ENCODE measurements at regions of chr11 and their contacts with region 1.

Region 1: GRCh38 chr11:17978553-17979287 is 34.1 kb downstream of the SERGEF start:
- DNase-seq: peak; percentile 71
- H3K4me3 Mint-ChIP-seq: no peak overlapping the region
- H3K27ac Mint-ChIP-seq: no peak overlapping the region
- H3K4me1 Mint-ChIP-seq: no peaks in the 10 kb centered on the region
- H3K27me3 Mint-ChIP-seq: no peaks in the 10 kb centered on the region

Region 2: DNA sequence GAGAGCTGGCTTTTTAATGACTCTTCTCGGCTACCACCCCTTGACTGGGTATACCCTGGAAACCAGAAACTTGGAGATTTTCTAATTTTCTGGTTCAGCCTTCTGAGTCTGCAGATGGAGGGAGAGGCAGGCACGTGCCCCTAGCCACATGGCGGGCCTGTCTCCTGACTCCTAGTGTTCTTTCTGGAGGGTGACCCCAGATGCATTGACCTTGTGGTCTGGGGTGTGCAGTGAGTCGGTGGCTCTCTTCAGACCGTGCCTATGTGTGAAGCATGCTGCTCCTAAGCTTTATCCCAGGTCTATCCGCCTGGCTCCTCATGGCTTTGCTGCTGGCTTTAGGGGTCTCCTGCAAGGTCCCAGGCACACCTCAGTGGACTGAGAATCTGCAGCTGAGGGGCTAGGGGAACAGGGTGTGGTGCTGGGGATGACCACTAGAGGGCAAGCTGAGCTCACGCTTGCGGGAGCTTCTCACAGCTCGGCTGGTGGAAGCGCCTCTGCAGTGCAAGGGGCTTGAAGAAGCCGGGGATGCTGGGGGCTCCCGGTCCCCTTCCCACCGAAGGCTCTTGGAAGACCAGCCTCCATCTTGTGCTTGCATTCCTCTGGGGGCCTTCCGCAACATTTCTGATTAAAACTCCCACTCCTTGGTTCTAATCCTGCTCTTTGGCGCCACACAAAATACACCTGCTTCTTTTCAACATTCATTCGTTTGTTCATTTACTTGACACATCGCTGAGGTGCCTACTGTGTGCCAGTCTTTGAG is 379.8 kb before region 1 on chr11:
- intact Hi-C with region 1: loop called (anchors 1 kb)
- DNase-seq: peak; percentile 90
- H3K4me3 Mint-ChIP-seq: no peak overlapping the region
- H3K27ac Mint-ChIP-seq: no peak overlapping the region
- H3K4me1 Mint-ChIP-seq: peaks cover 8% of the 10 kb centered on the region
- H3K27me3 Mint-ChIP-seq: no peaks in the 10 kb centered on the region

Region 3: DNA sequence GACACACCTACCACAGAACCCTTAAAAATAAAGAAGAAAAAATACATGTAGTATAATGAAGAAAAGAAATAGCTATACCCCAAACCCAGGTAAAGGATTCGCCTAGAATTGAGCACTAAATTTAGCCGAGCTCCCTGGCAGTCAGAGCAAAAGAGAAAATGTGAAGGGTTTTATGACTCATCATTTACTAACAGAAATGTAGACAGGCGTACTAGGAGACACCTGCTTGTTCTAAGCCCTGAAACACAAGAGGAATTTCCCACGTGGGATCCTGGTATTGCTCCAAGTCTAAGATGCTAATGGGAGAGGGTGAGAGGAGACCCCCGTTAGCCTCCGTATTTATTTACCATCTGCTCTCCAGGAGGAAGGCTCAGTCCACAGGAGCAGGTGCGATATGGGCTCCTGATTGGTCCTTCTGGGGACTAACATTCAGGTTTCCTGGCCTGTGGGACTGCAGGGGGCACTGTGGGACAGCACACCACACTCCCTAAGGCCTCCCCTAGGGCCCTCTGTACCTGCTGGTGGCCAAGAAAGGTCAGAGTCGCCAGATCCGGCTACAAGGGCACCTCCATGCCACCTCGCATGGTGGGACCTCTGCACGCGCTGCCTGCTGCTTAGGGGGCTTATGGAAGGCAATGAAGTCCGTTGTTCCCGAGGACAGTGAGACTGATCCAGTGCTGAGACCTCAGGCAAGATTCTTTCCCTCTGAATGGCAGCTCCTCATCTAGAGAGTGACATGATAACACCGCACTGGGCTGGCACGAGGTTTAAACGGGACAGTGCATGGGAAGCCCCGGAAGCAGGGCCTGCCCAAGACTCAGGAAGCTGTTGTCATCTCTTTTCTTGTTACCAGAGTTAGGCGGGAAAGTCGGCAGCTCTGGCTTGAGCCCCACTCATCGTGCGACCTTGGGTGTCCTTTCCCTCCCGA is 218.4 kb before region 1 on chr11:
- intact Hi-C with region 1: loop called (anchors 1 kb)
- DNase-seq: peak; percentile 74
- H3K4me3 Mint-ChIP-seq: no peak overlapping the region
- H3K27ac Mint-ChIP-seq: no peak overlapping the region
- H3K4me1 Mint-ChIP-seq: no peaks in the 10 kb centered on the region
- H3K27me3 Mint-ChIP-seq: no peaks in the 10 kb centered on the region

Region 4: DNA sequence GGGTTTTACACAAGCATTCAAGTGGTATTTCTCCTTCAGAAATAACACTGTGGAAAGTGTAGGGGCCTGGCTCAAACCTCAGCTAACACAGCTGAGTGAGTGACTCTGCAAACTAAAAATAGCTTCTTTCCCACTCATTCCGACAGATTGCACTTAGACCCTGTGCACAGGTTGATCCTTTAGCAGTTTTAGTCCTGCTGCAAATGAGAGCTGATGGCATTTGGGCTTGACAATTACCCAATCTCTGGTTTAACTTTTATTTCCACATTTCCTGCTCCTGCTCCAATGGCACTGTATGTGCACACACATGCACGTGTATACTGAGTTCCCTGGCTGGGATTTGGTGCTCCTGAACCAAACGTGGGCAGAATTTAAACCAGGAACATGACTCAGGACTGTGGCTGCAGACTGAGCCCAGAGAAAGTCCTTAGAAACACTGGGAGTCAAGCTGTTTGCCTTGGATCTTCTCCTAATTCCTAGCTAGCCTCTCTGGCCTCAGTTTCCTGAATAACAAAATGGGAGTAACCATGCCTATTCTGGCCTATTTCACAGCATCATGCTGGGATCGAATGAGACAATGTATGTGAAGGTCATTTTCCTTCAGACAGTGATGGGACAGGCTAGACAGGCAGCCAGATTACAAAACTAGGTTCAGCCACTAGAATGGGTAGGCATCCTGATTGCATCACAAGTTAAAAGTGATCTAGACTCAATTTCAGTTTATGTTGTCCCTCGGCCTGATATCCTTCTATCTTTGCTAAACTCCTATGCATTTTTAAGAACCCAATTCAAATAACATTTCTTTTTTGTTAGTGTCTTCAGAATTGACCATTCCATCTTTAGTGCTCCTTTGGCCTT is 24.1 kb before region 1 on chr11:
- intact Hi-C with region 1: no loop called
- DNase-seq: no peak
- H3K4me3 Mint-ChIP-seq: no peak overlapping the region
- H3K27ac Mint-ChIP-seq: no peak overlapping the region
- H3K4me1 Mint-ChIP-seq: no peaks in the 10 kb centered on the region
- H3K27me3 Mint-ChIP-seq: no peaks in the 10 kb centered on the region

Region 5: GRCh38 chr11:18229501-18229900 is 250.8 kb after region 1 on chr11:
- intact Hi-C with region 1: no loop called
- DNase-seq: no peak
- H3K4me3 Mint-ChIP-seq: no peak overlapping the region
- H3K27ac Mint-ChIP-seq: no peak overlapping the region
- H3K4me1 Mint-ChIP-seq: no peaks in the 10 kb centered on the region
- H3K27me3 Mint-ChIP-seq: peaks cover 22% of the 10 kb centered on the region

Measured in activated CD4-positive, alpha-beta T cell treated with anti-CD3 and anti-CD28 coated beads, Interleukin-2, amount 10 ng/mL, durations not matched to agents 24 days and 14 days (primary cell).